Posterior cingulate gyrus (tissue), 11 donors: ENCODE measurements at regions of chr2 and their contacts with region 1.

Region 1: GRCh38 chr2:109129921-109130722 is 1.1 kb downstream of the SH3RF3 start:
- DNase-seq: peak in 3 of 10 donors; percentile 30 to 40 (median 38)

Region 2: DNA sequence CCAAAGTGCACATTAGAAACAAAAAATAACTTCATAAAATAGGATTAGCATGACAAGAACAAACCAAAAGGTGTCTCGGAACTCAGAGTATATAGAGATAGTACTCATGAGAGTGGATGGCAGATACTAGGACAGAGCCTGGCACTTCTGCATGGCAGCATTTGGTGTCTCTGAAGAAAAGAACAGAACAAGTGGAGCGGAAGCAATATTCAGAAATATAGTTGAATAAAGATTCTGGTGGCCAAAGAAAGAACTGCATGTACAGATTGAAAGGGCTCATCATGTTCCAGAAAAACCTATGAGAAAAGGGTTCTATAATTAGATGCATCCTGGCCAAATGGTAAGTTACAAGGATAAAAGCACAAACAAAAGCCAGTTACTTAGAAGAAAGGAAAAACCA is 252.6 kb before region 1 on chr2:
- intact Hi-C with region 1: no loop called
- DNase-seq: no peak

Region 3: GRCh38 chr2:109508556-109508955 is 378.4 kb after region 1 on chr2:
- intact Hi-C with region 1: loop called (anchors 2 kb)
- DNase-seq: no peak